ENCODE measurements at regions of chr16 and their contacts with region 1.

Region 1: GRCh38 chr16:71845639-71846430 is at the start of gene ATXN1L:
- DNase-seq: peak; percentile 75 to 92
- H3K4me3 ChIP-seq: peak within 1 kb of the TSS; percentile 89
- H3K27ac ChIP-seq: peak within 1 kb of the TSS; percentile 57
- H3K4me1 ChIP-seq: peaks cover 9% of the 10 kb centered on the region
- H3K27me3 ChIP-seq: no peaks in the 10 kb centered on the region
- CTCF ChIP-seq: no peak
- total RNA-seq, gene ATXN1L: 18.2 and 25.3 TPM in 2 replicates

Region 2: DNA sequence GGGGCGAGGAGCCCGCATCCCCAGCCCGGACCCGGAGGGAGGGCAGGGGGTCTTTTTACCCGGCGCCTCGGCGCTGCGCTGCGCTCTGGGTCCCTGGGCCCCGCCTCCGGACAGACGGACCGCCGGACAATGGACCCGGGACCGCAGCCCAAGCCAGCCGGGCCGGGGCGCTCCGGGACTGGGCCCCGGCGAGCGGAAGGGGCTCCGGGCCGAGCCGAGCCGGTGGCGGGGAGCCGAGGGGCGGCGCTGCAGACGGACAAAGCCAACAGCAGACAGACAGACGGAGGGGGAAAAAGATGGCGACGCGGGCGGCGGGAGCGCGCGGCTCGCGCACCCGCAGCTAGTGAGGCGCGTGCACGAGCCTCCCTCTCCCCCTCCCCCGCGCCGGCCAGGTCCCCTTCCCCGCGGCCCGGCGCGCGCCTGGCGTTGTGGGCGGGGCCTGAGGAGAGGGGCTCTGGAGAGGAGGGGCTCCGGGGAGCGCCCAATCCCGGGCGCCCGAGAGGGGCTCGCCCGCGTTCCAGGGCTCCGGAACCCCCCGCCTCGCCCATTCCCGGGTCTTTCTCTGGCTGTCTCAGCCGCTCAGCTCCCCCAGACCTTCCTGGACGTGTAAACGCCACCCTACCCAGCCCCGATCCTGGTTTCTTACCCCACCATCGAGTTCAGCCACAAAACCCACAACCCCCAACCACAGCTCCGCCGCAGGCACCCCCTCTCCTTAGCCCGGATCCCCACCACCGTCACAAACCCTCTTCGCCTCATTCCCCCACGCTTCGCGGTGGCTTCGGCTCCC is 38.2 kb after region 1 on chr16 and contains the start of gene ZNF821:
- CTCF ChIA-PET with region 1: no interaction called
- POLR2A ChIA-PET with region 1: no interaction called
- intact Hi-C with region 1: loop called (anchors 2 kb)
- DNase-seq: peak in 1 of 2 experiments; percentile 68
- H3K4me3 ChIP-seq: peak within 1 kb of the TSS; percentile 83
- H3K27ac ChIP-seq: peak within 1 kb of the TSS; percentile 39; the same call in 1 of the 2 replicates
- H3K4me1 ChIP-seq: peaks cover 19% of the 10 kb centered on the region
- H3K27me3 ChIP-seq: no peaks in the 10 kb centered on the region
- CTCF ChIP-seq: peak; percentile 57; the same call in 1 of the 2 replicates
- total RNA-seq, gene ZNF821: 5.9 TPM in 2 replicates

Region 3: DNA sequence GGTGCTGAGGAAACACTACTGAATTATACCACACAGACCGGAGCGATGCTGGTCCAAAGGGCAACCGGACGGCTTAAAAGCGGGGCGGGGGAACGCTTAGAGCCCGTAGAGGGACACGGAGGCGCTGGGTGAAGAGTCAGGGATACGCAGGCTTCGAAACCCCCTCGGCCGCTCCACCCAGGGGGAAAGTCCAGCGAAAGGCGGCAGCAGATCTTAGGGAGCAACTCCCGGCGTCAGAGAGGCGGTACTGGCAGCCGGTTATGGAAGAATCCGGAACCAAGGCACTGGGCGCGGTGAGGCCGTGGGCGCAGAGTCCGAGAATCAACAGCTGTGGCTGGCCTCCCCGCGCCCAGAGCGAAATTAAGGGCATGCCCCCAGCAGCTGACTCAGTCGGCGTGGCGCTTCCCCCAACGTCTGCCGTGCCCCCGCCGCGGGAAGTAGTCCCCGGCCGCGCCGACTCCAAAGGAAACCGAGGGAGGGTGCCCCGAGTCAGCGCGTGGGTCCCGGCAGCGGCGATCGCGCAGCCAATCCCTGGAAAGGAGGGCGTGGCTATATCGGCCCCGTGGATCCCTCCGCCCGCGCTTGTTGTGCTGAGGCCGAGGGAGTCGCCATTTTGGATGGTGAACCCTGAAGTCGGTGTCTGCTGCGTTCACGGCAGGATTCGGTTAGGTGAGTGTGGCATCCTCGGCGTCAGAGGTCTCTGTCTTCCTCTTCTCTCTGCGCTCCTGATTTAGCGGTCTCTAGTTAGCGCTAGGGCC is 49.3 kb after region 1 on chr16 and contains the start of gene IST1:
- CTCF ChIA-PET with region 1: no interaction called
- POLR2A ChIA-PET with region 1: interaction called, 11 read pairs
- intact Hi-C with region 1: no loop called
- DNase-seq: peak; percentile 89 to 96
- H3K4me3 ChIP-seq: peak within 1 kb of the TSS; percentile 100
- H3K27ac ChIP-seq: peak within 1 kb of the TSS; percentile 90
- H3K4me1 ChIP-seq: peaks cover 23% of the 10 kb centered on the region
- H3K27me3 ChIP-seq: no peaks in the 10 kb centered on the region
- CTCF ChIP-seq: no peak
- total RNA-seq, gene IST1: 177 and 204 TPM in 2 replicates

Region 4: DNA sequence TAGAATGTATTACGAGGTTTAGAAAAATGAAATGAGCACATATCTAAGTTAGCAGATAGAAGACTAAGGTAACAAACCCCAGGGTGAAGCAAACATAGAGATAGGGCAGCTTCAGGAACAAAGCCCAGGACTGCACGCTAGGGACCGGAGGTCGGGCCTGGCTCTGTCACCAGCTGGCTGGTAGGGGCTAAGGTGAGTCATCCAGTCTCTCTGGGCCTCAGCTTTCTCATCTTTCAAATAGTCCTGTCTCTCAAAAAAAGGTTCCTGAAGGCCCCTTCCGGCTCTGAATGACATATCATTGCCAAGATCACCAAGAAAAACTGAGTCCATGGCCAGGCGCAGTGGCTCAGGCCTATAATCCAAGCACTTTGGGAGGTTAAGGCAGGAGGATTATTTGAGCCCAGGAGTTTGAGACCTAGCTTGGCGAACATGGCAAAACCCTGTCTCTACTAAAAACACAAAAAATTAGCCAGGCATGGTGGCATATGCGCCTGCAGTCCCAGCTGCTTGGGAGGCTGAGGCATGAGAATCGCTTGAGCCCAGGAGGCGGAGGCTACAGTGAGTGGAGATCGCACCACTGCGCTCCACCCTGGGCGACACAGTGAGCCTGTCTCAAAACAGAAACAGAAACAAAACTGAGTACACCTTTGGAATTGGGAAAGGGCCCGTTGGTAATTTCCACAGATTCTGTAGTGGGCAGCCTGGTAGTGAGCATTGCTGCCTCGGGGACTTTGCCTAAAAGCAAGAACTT is 128.4 kb after region 1 on chr16:
- CTCF ChIA-PET with region 1: interaction called, 10 read pairs
- POLR2A ChIA-PET with region 1: no interaction called
- intact Hi-C with region 1: no loop called
- DNase-seq: no peak
- H3K4me3 ChIP-seq: no peak overlapping the region
- H3K27ac ChIP-seq: no peak overlapping the region
- H3K4me1 ChIP-seq: no peaks in the 10 kb centered on the region
- H3K27me3 ChIP-seq: no peaks in the 10 kb centered on the region
- CTCF ChIP-seq: no peak

Measured in PC-9 (cell line).